H1 (cell line): ENCODE measurements at regions of chr2 and their contacts with region 1.

Region 1: GRCh38 chr2:165563468-165564225 is 94.1 kb downstream of the CSRNP3 start:
- DNase-seq: no peak
- H3K4me3 ChIP-seq: no peak overlapping the region
- H3K27ac ChIP-seq: no peak overlapping the region
- H3K4me1 ChIP-seq: no peaks in the 10 kb centered on the region; a peak in 1 of 7 replicates
- H3K27me3 ChIP-seq: no peaks in the 10 kb centered on the region
- CTCF ChIP-seq: peak; percentile 9 to 95 (median 72)
- EP300 ChIP-seq: no peak
- POLR2A ChIP-seq: no peak
- RAD21 ChIP-seq: peak; percentile 80 to 82

Region 2: DNA sequence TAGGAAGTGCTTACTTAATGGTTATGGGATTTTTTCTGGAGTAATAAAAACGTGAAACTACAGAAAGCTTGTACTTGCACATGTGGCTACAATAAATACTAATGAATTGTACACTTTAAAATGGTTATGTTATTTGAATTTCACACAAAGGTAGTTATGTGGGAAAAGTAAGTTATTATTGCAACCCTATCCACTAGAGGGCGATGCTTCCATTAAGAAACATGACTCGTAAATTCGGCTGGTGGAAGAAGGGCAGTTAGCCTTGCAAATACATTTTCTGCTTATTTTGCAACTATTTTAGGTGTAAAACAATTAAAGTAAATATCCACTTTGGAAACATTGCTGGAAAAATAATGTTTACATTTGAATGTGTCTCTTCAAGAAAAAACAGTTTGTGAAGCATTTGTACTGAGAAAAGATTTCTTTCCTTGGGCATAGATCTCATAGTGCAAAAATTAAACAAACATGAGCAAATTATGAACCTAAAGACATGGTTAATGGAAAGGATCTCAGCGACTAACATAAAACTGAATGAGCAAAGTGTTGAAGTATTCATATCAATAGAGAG is 162.3 kb before region 1 on chr2:
- CTCF ChIA-PET with region 1: interaction called, 69 read pairs
- POLR2A ChIA-PET with region 1: no interaction called
- DNase-seq: no peak
- H3K4me3 ChIP-seq: no peak overlapping the region
- H3K27ac ChIP-seq: no peak overlapping the region
- H3K4me1 ChIP-seq: peaks cover 0 to 5% (median 4%) of the 10 kb centered on the region in 4 experiments; a peak in 5 of 7 replicates
- H3K27me3 ChIP-seq: no peaks in the 10 kb centered on the region
- CTCF ChIP-seq: peak in 2 of 3 experiments; percentile 60 to 71; a peak in 2 of 4 replicates
- EP300 ChIP-seq: no peak
- POLR2A ChIP-seq: no peak
- RAD21 ChIP-seq: peak; percentile 84 to 88

Region 3: DNA sequence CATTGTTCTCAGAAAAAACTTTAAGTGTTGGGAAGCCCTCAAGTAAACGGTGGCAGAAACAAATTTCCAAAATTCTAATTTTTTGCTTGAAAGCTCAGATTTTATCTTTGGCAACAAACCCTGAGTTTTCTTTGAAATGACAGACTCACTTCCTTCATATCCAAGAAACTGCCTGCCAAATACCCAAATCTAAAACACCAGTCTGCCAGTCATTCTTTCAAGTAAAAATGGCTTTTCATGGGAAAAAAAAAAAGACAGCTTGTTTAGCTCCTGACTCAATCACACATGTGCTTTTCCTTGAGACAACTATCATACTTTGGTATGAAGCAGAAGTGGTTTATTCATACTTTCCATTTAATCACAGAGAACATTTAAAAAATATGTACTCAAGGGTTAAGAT is 134.7 kb before region 1 on chr2:
- CTCF ChIA-PET with region 1: no interaction called
- POLR2A ChIA-PET with region 1: no interaction called
- DNase-seq: no peak
- H3K4me3 ChIP-seq: no peak overlapping the region
- H3K27ac ChIP-seq: no peak overlapping the region
- H3K4me1 ChIP-seq: peaks cover 0 to 2% (median 0%) of the 10 kb centered on the region in 4 experiments; a peak in 2 of 7 replicates
- H3K27me3 ChIP-seq: no peaks in the 10 kb centered on the region
- CTCF ChIP-seq: no peak
- EP300 ChIP-seq: no peak
- POLR2A ChIP-seq: no peak
- RAD21 ChIP-seq: no peak

Region 4: DNA sequence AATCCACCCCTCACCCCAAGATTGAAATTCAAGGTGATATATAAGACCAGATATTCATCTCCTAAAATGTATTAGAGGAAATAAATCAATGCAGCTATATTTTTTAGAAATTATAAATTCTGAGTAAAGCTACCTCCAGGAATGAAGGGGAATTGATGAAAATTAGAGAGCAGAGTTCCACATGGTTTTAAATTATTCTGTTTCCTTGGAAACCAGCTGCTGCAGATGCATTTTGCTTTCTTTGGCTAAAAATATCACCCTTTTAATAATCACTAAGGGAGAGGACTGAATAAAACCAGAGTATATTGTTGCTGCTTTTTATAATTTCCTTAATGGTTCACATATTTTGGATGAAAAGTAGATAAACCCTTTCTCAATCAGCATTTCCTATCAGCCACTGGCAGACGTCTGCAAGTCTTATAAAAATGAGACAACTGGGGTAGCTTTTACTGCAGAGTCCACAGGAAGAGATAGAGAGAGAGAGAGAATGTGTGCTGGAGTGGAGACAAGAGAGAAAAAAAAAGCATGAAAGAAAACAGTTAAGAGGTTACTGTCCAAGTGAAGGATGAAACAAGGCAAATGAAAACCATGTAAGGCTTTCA is 92.2 kb before region 1 on chr2:
- CTCF ChIA-PET with region 1: interaction called, 11 read pairs
- POLR2A ChIA-PET with region 1: no interaction called
- DNase-seq: no peak
- H3K4me3 ChIP-seq: peak overlapping the region in 1 of 4 experiments; percentile 29; a peak in 1 of 8 replicates
- H3K27ac ChIP-seq: no peak overlapping the region
- H3K4me1 ChIP-seq: peaks cover 0 to 5% (median under 1%) of the 10 kb centered on the region in 4 experiments; a peak in 2 of 7 replicates
- H3K27me3 ChIP-seq: no peaks in the 10 kb centered on the region
- CTCF ChIP-seq: no peak
- EP300 ChIP-seq: no peak
- POLR2A ChIP-seq: no peak
- RAD21 ChIP-seq: no peak

Region 5: DNA sequence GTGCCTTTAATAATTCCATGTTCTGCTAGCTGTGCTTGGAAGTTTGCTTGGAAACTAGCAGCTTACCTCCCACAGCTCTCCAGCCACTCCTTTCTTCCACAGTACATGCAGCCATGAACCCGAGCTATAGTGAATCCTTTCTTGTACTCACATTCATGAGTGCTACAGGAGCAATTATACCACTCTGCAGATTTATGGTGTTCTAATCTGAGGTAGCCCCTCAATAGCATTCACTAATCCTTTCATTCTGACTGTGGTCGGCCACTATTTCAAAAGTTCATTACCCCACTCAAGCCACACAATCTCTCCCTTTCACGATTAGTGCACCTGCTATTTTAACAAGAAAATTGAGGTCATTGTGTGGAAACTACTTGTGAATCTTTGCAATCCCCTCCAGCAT is 40.9 kb before region 1 on chr2:
- CTCF ChIA-PET with region 1: no interaction called
- POLR2A ChIA-PET with region 1: no interaction called
- DNase-seq: no peak
- H3K4me3 ChIP-seq: no peak overlapping the region
- H3K27ac ChIP-seq: no peak overlapping the region
- H3K4me1 ChIP-seq: peaks cover 0 to 4% (median under 1%) of the 10 kb centered on the region in 4 experiments; a peak in 3 of 7 replicates
- H3K27me3 ChIP-seq: no peaks in the 10 kb centered on the region
- CTCF ChIP-seq: no peak
- EP300 ChIP-seq: no peak
- POLR2A ChIP-seq: no peak
- RAD21 ChIP-seq: no peak

Region 6: GRCh38 chr2:165681841-165682240 is 118.2 kb after region 1 on chr2:
- CTCF ChIA-PET with region 1: interaction called, 10 read pairs
- POLR2A ChIA-PET with region 1: no interaction called
- DNase-seq: no peak
- H3K4me3 ChIP-seq: no peak overlapping the region
- H3K27ac ChIP-seq: no peak overlapping the region
- H3K4me1 ChIP-seq: peaks cover 0 to 4% (median 3%) of the 10 kb centered on the region in 4 experiments; a peak in 3 of 7 replicates
- H3K27me3 ChIP-seq: no peaks in the 10 kb centered on the region
- CTCF ChIP-seq: no peak
- EP300 ChIP-seq: no peak
- POLR2A ChIP-seq: no peak
- RAD21 ChIP-seq: no peak

Region 7: DNA sequence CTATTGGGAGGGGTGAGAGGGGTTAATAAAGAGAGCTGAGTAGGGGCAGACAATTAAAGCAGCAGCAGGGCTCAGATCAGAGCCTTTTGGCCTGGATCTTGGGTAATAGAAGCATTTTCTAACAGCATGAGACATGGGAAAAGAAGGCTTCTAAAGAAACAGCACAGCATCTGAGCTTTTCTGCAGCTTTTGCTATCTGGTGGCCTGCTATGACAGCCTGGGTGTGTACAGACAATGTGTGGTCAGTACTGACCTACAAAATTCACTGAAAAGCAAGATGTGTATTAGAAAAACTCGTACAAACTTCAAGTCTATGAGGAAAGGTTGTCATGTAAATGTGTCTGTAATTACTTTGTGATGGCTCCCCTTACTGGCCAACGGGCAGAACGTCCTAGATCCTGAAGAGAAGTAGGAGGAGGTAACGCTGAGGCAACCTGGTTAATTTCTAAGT is 134.8 kb after region 1 on chr2:
- CTCF ChIA-PET with region 1: interaction called, 12 read pairs
- POLR2A ChIA-PET with region 1: no interaction called
- DNase-seq: peak in 1 of 2 experiments; percentile 69
- H3K4me3 ChIP-seq: no peak overlapping the region; a peak in 1 of 8 replicates
- H3K27ac ChIP-seq: no peak overlapping the region
- H3K4me1 ChIP-seq: peaks cover 0 to 14% (median 5%) of the 10 kb centered on the region in 4 experiments; a peak in 5 of 7 replicates
- H3K27me3 ChIP-seq: no peaks in the 10 kb centered on the region
- CTCF ChIP-seq: peak; percentile 26 to 67 (median 45)
- EP300 ChIP-seq: no peak
- POLR2A ChIP-seq: no peak
- RAD21 ChIP-seq: peak; percentile 65 to 73

Region 8: GRCh38 chr2:165720511-165720910 is 156.9 kb after region 1 on chr2:
- CTCF ChIA-PET with region 1: no interaction called
- POLR2A ChIA-PET with region 1: no interaction called
- DNase-seq: no peak
- H3K4me3 ChIP-seq: no peak overlapping the region
- H3K27ac ChIP-seq: no peak overlapping the region
- H3K4me1 ChIP-seq: no peaks in the 10 kb centered on the region
- H3K27me3 ChIP-seq: no peaks in the 10 kb centered on the region
- CTCF ChIP-seq: no peak
- EP300 ChIP-seq: no peak
- POLR2A ChIP-seq: no peak
- RAD21 ChIP-seq: no peak

Region 9: DNA sequence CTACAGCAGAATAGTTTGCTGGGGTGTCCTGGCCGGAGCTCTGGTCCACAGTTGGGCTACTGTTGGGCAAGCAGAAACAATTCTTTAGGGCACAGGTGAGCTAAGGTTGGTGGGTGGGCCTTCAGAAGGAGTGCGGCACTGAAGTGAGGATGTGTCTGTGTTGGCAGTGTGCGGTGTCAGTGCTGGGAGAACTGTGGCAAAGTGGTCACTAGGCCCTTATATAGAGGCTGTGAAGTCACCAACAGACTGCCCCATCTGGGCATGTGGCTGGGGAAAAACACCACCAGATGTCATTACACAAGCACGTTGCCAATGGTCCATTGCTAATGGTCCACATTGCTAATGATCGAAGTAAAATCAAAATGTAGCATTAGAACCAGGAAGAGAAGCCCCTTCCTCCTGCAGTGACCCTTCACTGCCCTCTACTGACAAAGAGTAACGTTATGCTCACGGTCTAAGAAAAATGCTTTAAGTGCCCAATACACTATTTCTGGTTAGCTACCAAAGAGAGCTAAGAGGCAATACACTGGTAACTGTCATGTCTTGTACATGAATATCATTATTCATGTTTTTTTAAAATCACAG is 542.9 kb after region 1 on chr2:
- CTCF ChIA-PET with region 1: no interaction called
- POLR2A ChIA-PET with region 1: no interaction called
- DNase-seq: no peak
- H3K4me3 ChIP-seq: no peak overlapping the region
- H3K27ac ChIP-seq: no peak overlapping the region
- H3K4me1 ChIP-seq: no peaks in the 10 kb centered on the region
- H3K27me3 ChIP-seq: no peaks in the 10 kb centered on the region
- CTCF ChIP-seq: peak in 2 of 3 experiments; percentile 73 to 82; a peak in 3 of 4 replicates
- EP300 ChIP-seq: no peak
- POLR2A ChIP-seq: no peak
- RAD21 ChIP-seq: peak; percentile 84 to 85